RWPE1 (cell line): ENCODE measurements at regions of chr2 and their contacts with region 1.

Region 1: DNA sequence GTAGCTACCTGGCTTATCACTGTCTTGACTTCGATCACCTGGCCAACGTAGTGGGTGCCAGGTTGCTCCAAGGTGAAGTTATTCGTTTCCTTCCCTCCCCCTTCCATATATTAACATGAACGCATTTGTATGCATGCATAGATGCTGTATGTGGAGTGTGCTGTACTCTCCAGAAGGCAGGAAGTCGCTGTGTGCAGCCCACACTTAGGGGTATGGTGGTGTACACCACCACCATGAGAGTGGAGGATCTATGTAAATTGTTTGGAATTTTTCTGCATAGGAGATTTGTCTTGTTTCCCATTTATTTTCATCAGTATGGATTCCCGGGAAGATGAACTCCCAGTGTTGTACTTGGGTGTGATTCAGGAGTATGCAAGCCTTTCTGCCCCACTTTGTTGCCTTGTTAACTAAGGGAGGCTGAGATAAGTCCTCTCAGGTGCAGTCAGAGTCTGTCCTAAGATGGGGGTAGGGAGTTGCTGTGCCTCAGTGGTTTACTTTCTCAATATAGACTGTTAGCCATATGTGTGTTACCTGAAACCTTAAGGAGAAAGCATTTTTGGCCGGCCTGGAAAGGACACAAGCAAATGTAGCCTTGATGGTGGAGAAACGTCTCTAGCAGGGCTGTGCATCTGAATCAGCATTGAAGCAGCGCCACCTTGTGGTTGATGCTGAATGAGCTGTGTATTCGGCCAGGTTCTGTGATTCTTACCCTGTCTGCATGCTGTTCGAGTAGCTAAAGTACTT is 149.8 kb downstream of the TANC1 start:
- DNase-seq: peak; percentile 60
- H3K27ac ChIP-seq: peak overlapping the region; percentile 17; the same call in 1 of the 2 replicates
- CTCF ChIP-seq: peak; percentile 88

Region 2: DNA sequence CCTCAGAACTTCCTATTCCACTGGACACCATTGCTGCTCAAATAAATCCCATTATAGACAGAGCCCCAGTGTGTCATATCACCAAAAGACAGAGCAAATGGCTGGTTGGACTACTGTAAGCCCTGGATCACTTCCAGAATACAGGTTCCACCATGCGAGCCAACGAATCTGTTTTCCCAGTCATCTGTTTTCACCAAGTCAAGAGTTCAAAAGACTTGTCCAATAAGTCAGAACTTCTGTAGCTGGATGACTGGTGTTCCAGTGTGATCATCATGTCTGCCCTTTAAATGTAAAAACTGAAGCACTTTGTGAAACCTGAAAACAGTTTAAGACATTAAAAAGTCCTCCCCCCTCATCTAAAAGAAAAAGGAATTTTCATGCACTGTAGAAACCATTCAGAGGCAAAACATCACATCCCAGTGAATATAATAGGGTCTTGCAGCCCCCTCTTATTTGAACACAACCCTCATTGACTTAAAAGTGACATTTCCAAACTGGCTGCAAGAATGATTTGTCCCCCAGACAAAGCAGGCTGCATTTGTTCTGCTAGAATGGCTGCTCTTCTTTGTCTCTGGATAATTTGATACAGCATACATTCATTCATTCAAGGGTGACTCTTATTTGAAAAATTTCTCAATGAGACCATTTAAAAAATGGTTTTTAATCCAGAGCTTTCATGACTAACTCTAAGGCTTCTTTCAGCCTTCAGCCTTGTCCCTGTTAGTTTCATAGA is 214.4 kb before region 1 on chr2:
- CTCF ChIA-PET with region 1: interaction called, 11 read pairs
- POLR2A ChIA-PET with region 1: no interaction called
- DNase-seq: no peak
- H3K27ac ChIP-seq: no peak overlapping the region
- CTCF ChIP-seq: no peak

Region 3: GRCh38 chr2:159106109-159106508 is 12.2 kb before region 1 on chr2:
- CTCF ChIA-PET with region 1: no interaction called
- POLR2A ChIA-PET with region 1: no interaction called
- DNase-seq: no peak
- H3K27ac ChIP-seq: no peak overlapping the region
- CTCF ChIP-seq: no peak